ENCODE measurements at regions of chr17 and their contacts with region 1.

Region 1: GRCh38 chr17:34637548-34638525 is 58.5 kb downstream of the TMEM132E start:
- DNase-seq: peak; percentile 85
- ATAC-seq: peak; percentile 98

Region 2: DNA sequence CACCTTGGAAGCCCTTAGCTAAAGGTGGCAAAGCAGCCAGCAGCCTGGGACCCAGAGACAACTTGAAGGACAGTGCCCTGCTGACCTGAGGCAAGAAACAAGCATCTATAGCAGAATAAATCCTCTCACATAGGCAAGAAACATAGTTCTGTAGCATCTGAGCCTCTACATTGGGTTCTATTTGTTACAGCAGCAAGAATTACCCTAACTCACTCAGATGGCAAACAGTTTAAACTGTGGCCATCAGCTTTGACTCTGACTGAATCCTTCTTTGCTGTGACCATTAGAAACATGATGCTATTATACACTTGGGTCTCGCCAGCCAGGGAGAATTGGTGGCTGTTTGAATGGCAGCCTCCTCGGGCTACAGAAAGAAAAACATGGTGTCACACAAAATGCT is 221.7 kb before region 1 on chr17:
- intact Hi-C with region 1: loop called (anchors 5 kb)
- DNase-seq: no peak
- ATAC-seq: no peak

Region 3: DNA sequence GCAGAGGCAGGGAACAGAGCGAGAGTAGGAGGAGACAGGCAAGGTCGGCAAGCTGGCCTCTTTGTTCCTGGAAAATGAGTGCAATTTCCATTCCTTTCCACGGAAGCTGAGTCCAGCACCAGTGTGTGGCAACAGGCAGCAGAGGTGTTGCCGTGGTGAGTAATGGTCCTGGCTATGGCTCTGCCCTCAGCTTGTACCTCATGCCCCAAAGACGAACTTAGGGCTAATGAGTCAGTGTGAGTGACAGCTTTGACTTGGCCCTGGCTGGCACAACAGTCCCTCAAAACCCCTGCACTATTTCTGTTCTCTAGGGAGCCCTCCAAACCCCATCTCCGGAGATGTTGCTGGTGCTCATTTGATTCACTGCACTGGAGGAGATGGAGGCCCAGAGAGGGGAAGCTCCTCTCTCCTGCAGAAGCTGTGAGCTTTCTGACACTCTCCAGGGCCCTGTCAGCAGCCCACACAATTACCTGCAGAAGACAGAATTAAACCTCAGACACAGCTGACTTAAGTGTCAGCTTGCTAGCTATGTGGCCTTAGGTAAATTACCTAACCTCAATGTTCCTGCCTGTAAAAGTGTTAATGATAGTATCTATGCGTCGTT is 71.4 kb after region 1 on chr17:
- intact Hi-C with region 1: no loop called
- DNase-seq: no peak
- ATAC-seq: no peak

Region 4: DNA sequence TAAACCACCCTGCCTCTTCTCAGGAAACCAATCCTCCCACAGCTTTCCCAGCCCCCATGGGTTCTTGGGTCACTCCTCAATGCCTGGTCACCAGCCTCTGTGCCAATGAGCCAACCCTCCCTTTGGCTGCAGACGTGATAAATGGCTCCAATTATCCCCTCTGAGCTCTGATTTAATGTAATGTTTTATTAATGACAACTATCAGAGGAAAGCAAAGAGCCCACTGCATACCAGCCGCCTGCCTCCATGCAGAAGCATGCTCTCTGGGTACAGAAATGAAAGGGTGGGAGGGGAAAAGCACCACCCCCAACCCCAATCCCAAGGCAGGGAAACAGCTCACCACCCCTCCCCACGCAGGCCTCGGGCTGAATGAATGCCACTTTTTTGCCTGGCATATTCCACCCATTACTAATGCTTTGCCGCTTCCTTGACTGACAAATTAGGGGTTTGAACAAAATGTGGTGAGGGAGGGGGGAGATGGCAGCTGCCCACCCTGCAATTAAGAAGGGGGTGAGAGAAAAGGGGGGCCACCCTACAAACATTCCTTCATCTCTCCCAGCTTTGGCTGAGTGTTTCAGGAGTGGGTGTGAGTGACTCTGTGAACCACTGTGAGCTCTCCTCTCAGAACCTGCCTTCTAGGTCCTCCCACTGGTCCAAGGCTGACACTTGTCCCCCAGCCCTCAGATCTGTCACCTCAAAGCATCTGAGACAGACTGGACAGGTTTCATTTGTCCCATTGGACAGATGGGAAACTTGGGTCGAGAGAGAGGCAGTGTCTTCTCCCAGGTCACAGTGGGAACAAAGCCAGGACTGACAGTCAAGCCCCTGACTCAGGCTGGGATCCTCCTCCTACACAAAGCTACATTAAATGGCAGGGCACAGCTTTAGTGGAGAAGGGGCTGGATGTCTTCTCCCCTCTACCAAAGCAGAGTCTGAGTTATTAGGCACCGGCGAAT is 103.0 kb after region 1 on chr17:
- intact Hi-C with region 1: no loop called
- DNase-seq: no peak
- ATAC-seq: no peak

Measured in left ventricle myocardium superior (tissue), 1 donor.